Posterior vena cava (tissue), 2 donors: ENCODE measurements at regions of chr14 and their contacts with region 1.

Region 1: GRCh38 chr14:100239840-100240724 is 1.1 kb downstream of the YY1 start:
- DNase-seq: peak; percentile 97

Region 2: DNA sequence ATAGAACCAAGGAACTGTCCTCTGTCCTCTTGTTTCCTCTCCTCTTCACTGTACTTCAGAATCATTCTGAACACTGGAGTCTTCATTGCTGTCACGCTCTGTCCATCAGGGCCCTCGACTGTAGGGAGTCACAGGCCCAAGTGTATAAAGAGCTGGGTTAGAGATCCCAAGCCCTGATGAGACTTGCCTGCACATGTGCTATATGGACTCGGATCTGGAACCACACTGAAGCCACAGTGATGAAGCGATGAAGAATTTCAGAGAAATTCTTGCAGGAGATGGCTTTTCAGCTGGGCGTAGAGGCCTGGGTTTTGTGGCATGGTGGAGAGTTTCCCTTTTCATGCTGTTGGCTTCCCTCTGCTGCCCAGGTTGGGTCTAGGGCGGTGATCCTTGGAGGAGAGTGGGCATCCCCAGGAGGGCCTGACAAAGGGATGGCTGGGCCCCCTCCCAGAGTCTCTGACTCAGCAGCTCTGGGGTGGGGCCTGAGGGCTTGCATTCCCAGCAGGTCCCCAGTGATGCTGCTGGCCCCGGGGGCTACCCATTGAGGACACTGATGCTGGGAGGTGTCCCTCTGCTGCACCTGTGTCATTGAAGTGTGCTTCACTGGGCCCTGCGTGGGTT is 40.7 kb before region 1 on chr14:
- intact Hi-C with region 1: no loop called
- DNase-seq: no peak

Region 3: GRCh38 chr14:100213956-100214774 is 25.9 kb before region 1 on chr14:
- intact Hi-C with region 1: no loop called
- DNase-seq: peak; percentile 96

Region 4: DNA sequence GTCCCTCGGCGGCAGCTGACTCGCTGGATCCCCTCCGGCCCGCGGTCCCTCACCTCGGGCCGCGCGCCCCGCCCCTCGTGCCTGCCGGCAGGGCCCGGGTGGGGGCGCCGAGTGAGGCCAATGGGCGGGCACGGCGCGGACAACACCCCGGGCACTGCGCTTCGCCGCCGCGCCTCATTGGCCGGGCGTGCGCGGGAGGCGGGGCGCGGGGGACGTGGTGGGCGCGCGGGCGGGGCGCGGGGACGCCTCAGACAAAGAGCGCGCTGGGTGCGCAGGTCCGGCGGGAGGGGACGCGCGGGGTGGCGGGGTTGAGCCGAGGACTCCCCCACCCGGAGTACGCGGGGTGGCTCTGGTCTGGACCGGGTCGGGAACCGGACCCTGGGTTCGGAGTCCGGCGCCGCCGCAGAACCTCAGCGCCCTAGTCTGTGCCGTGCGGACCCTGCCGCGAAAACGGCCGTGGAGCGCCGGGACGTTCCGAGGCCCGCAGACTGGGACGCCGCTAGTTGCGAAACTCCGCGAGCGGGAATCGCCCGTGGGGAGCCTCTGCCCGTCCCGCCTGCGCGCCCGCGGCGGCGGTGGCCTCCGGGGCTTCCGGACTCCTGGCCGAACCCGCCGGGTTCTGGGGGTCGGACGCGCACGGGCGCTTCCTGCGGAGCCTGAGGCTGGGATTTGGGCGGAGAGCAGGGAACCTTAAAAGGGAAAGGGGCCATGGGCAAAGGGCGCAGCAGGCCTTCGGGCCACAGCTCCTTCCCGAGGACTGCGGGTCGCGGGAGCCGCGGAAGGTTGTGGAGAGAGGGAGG is 66.5 kb after region 1 on chr14 and contains the start of gene SLC25A29:
- intact Hi-C with region 1: loop called in 1 of 2 experiments (anchors 10 kb)
- DNase-seq: peak; percentile 95
- total RNA-seq, gene SLC25A29: 23.6 to 27.4 TPM

Region 5: GRCh38 chr14:101072945-101073597 is 833.0 kb after region 1 on chr14:
- intact Hi-C with region 1: no loop called
- DNase-seq: peak; percentile 80